ENCODE measurements at regions of chr2 and their contacts with region 1.

Region 1: GRCh38 chr2:85826990-85827878 is 61.6 kb downstream of the ST3GAL5 start:
- DNase-seq: peak; percentile 92
- ATAC-seq: peak; percentile 96
- H3K4me3 Mint-ChIP-seq: no peak overlapping the region
- H3K27ac Mint-ChIP-seq: peak overlapping the region; percentile 28
- H3K4me1 Mint-ChIP-seq: peaks cover 28% of the 10 kb centered on the region
- H3K27me3 Mint-ChIP-seq: peaks cover 2% of the 10 kb centered on the region
- CTCF ChIP-seq: peak; percentile 89

Region 2: DNA sequence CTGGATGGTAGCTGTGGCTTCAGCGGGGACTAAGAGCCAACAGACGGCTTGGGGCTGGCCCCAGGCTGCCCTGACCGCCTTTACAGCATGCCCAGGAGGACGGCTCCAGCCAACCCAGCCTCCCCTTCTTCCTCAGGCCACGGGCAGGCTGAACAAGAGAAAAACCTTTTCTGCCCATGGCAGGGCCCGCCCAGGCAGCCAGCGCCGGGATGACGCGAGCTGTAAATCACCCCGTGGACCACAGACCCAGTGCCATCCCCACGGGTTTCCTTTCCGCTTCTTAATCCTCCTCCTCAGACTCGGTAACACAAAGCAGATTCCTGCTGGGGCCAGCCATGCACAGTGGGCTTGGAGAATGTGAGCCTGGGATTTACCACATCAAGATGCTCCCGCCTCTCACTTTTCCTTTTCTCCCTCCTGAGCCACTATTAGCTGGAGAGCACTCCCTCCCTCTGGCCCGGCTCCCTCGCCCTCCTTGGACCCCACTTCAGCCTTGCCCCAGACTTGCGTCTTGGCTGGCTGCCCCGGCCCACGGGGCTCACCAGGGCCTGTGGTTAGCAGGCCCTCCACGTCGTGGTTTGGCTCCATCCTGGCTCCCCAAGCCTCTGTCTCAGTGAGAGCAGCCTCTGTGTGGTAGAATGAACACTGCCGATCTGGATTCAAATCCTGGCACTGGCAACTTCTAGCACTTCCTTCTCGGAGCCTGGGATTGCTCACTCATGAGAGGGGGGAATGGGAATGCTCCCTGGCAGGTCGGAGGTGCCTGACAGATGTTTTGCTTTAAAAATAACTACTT is 42.0 kb before region 1 on chr2:
- CTCF ChIA-PET with region 1: no interaction called
- POLR2A ChIA-PET with region 1: no interaction called
- intact Hi-C with region 1: no loop called
- DNase-seq: peak; percentile 30
- ATAC-seq: peak; percentile 45
- H3K4me3 Mint-ChIP-seq: no peak overlapping the region
- H3K27ac Mint-ChIP-seq: no peak overlapping the region
- H3K4me1 Mint-ChIP-seq: peaks cover 2% of the 10 kb centered on the region
- H3K27me3 Mint-ChIP-seq: no peaks in the 10 kb centered on the region
- CTCF ChIP-seq: no peak

Region 3: GRCh38 chr2:85813982-85814801 is 13.0 kb before region 1 on chr2:
- CTCF ChIA-PET with region 1: interaction called, 68 read pairs
- POLR2A ChIA-PET with region 1: interaction called, 3 read pairs
- intact Hi-C with region 1: no loop called
- DNase-seq: peak; percentile 91
- ATAC-seq: peak; percentile 98
- H3K4me3 Mint-ChIP-seq: no peak overlapping the region
- H3K27ac Mint-ChIP-seq: no peak overlapping the region
- H3K4me1 Mint-ChIP-seq: no peaks in the 10 kb centered on the region
- H3K27me3 Mint-ChIP-seq: peaks cover 9% of the 10 kb centered on the region
- CTCF ChIP-seq: peak; percentile 89

Region 4: GRCh38 chr2:85873679-85874078 is 46.4 kb after region 1 on chr2:
- CTCF ChIA-PET with region 1: interaction called, 14 read pairs
- POLR2A ChIA-PET with region 1: no interaction called
- intact Hi-C with region 1: no loop called
- DNase-seq: peak; percentile 13
- ATAC-seq: no peak
- H3K4me3 Mint-ChIP-seq: no peak overlapping the region
- H3K27ac Mint-ChIP-seq: no peak overlapping the region
- H3K4me1 Mint-ChIP-seq: peaks cover 45% of the 10 kb centered on the region
- H3K27me3 Mint-ChIP-seq: no peaks in the 10 kb centered on the region
- CTCF ChIP-seq: peak; percentile 18

Region 5: DNA sequence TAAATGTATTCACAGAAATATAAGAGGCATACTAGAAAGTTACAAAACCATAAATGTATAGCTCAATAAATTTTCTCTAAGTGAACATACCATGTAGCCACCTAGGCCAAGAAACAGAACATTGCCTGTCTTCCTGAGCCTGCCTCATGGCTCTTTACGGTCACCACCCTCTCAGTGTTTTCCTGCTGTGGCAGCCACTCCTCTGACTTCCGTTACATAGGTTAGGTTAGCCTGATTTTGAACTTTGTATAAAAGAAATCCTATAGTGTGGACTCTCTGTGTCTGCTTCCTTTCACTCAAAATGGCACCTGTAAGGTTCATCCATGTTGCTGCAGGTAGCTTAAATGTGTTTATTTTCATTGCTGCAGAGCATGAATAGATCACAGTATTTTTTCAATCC is 73.1 kb after region 1 on chr2:
- CTCF ChIA-PET with region 1: interaction called, 10 read pairs
- POLR2A ChIA-PET with region 1: no interaction called
- intact Hi-C with region 1: no loop called
- DNase-seq: no peak
- ATAC-seq: no peak
- H3K4me3 Mint-ChIP-seq: no peak overlapping the region
- H3K27ac Mint-ChIP-seq: no peak overlapping the region
- H3K4me1 Mint-ChIP-seq: peaks cover 27% of the 10 kb centered on the region
- H3K27me3 Mint-ChIP-seq: no peaks in the 10 kb centered on the region
- CTCF ChIP-seq: no peak

Region 6: DNA sequence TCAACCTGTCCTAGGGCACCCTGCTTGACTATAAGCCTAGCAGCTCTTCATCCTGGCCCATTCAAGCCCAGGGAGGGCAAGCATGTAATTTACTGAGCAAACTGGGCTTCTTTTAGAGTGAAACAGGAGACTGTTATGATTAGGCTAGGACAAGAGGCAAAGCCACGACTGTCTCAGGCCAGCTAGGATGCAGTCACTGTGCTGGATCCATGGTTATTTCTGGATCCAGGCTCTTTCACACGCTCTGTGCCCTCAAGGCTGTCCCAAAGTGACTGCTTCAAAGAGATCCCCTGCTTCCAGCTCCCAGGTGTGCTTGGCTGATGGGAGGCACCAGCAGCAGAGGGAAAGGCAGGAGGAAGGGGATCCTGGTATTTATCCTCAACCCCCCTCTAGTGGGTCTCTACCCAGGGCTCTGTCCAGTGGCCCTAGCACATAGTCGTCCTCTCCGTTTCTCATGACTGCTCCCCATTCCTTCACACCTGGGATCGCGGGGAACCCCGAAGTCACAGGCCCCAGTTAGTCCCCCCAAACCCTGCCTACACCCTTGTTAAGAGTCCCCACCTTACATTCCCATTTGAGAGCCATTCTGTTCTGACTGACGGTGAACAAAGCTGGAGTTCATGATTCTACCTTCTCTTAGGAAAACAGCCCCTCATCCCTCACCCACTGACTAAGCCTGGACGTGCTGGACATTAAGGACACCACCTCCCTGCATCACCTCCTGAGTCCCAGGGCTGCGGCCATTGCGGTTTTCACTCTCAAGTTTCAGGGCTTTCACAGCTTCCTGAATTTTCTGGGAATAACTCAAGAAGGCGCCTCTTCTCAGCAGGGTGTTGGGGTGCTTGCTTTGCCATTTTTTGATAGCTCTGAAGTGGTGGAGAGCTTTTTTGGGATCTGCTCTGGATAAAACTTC is 215.3 kb after region 1 on chr2:
- CTCF ChIA-PET with region 1: interaction called, 19 read pairs
- POLR2A ChIA-PET with region 1: no interaction called
- intact Hi-C with region 1: loop called (anchors 5 kb)
- DNase-seq: no peak
- ATAC-seq: no peak
- H3K4me3 Mint-ChIP-seq: no peak overlapping the region
- H3K27ac Mint-ChIP-seq: peak overlapping the region; percentile 63
- H3K4me1 Mint-ChIP-seq: peaks cover 49% of the 10 kb centered on the region
- H3K27me3 Mint-ChIP-seq: no peaks in the 10 kb centered on the region
- CTCF ChIP-seq: no peak

Region 7: DNA sequence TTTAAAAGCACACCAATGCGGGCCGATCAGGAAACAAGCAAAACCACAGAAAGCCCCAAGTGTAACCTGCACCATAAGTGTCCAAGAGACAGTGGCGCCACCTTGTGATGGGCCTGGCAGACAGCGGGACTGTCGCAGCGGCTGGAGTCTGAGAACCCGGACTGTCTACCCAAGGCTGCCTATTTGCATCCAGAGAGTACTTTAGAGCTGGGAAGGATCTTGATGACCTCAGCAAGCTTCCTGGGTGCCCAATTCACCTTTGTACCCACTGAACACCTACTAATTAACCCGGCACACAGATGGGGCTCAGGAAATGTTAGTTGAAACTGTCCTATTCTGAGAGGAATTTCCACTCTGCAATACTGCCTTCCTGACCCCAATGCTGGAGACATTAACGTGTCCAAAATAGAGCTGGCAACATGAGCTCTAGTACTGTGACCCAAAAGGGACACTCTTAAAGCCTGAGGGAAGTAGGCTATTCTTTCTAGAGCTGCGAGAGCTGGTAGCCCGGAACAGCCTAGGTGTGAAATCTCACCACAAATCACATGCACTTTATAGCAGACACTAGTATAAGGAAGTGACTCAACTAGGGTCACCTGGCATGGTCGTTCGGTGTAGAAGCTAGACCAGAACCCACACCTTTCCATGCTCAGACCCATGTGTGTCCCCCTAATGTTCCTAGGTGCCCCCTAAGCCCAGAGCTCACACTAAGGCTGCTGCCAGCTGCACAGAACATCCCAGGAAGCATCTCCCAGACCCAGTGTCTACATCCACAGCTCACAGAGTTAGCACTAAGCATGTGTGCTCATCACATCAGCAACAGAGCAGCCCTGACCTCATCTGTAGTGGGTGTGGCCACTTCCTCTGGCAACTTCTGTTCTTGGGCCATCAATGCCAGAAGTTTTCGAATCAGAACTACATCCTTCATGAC is 253.0 kb after region 1 on chr2:
- CTCF ChIA-PET with region 1: interaction called, 186 read pairs
- POLR2A ChIA-PET with region 1: interaction called, 4 read pairs
- intact Hi-C with region 1: loop called (anchors 1 kb)
- DNase-seq: peak; percentile 87
- ATAC-seq: peak; percentile 78
- H3K4me3 Mint-ChIP-seq: no peak overlapping the region
- H3K27ac Mint-ChIP-seq: peak overlapping the region; percentile 80
- H3K4me1 Mint-ChIP-seq: peaks cover 25% of the 10 kb centered on the region
- H3K27me3 Mint-ChIP-seq: no peaks in the 10 kb centered on the region
- CTCF ChIP-seq: peak; percentile 75

Measured in activated CD8-positive, alpha-beta T cell treated with anti-CD3 and anti-CD28 coated beads for 36 hours (primary cell).